ENCODE measurements at regions of chr14 and their contacts with region 1.

Region 1: GRCh38 chr14:68685419-68686204 is 107.3 kb downstream of the ZFP36L1 start:
- DNase-seq: peak; percentile 60 to 89 (median 77)
- ATAC-seq: peak; percentile 86 to 90 (median 88)
- H3K4me3 ChIP-seq: no peak overlapping the region
- H3K4me3 Mint-ChIP-seq: peak overlapping the region; percentile 4 to 78 (median 50)
- H3K27ac ChIP-seq: peak overlapping the region; percentile 88
- H3K27ac Mint-ChIP-seq: peak overlapping the region; percentile 95 to 96
- H3K4me1 ChIP-seq: peaks cover 29 to 60% of the 10 kb centered on the region in 2 experiments
- H3K4me1 Mint-ChIP-seq: peaks cover 57 to 71% (median 66%) of the 10 kb centered on the region in 3 donors
- H3K27me3 ChIP-seq: no peaks in the 10 kb centered on the region
- H3K27me3 Mint-ChIP-seq: no peaks in the 10 kb centered on the region

Region 2: DNA sequence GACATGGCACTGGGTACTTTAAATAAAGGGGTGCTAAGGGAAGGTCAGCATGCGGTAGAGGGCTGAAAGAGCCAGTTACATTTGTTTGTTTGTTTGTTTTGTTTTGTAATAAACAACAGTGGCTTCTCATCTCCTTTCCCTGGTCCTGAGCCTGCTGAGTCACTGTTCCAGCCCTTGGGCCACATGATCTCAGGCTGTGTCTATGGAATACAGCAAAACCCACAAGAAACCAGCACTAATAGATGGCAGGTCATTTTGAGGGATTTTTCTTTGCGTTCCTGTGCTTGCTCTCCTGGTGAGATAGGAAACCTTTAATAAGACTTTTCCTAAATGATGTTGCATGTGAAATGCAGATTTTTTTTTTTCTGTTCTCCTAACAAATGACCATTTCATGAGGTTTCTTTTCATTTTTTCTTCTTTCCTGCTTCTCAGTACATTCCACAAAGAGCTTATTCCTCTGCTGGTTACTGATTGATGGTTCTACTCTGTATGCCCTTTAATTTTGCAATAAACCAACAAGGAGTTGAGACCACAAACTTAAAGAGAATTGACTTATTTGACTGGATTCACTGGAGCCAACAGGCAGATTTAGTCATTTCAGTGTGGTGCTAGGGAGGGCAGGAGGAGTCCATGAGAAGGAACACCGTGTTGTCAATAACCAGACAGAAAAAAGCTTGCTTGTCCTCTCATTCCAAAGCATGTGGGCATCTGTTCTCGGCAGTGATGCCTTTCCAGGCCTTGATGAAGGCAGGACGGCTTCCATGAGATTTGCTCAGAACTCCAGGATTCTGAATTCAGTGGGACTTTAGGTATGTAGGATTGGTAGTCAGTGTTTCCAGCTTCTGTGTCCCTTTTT is 406.8 kb before region 1 on chr14:
- CTCF ChIA-PET with region 1: no interaction called
- POLR2A ChIA-PET with region 1: interaction called in 1 of 2 experiments, 13 read pairs
- DNase-seq: no peak
- ATAC-seq: no peak
- H3K4me3 ChIP-seq: no peak overlapping the region
- H3K4me3 Mint-ChIP-seq: no peak overlapping the region
- H3K27ac ChIP-seq: no peak overlapping the region
- H3K27ac Mint-ChIP-seq: peak overlapping the region in 1 of 2 donors; percentile 18
- H3K4me1 ChIP-seq: peaks cover 31 to 38% of the 10 kb centered on the region in 2 experiments
- H3K4me1 Mint-ChIP-seq: peaks cover 61 to 81% (median 76%) of the 10 kb centered on the region in 3 donors
- H3K27me3 ChIP-seq: no peaks in the 10 kb centered on the region
- H3K27me3 Mint-ChIP-seq: no peaks in the 10 kb centered on the region

Region 3: DNA sequence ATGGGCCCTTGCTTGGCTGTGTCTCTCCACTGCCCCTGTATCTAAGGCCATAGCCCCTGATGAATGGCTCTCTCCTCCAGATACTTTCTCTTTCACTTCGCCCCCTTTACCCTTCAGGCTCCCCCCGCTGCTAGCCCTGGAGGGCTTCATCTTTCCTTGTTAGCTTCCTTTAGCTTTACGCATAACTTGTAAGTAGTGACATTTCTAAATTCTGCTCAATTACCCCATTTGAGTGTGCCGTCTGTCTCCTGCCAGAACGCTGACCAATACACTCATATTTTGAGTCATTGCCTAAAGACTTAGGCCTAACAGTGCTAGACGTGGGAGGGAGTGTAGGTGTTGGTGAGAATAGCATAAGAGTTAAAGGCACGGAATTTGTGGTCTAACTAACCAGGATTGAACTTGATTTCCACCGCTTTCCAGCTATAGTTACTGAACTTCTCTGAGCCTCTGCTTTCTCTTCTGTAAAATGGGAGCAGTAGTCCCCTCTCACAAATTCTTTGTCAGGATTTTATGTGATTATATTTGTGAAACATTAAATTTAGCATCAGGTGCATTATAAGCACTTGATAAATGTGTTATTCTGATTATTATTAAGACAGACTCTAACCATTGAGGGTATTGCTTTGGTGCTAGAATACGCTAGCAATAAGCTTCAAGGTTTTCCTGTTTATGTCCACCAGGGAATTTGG is 22.1 kb before region 1 on chr14:
- CTCF ChIA-PET with region 1: interaction called in 1 of 2 experiments, 12 read pairs
- POLR2A ChIA-PET with region 1: interaction called in 1 of 2 experiments, 8 read pairs
- DNase-seq: peak in 1 of 35 experiments; percentile 42
- ATAC-seq: peak; percentile 35 to 60 (median 56)
- H3K4me3 ChIP-seq: peak overlapping the region in 1 of 2 donors; percentile 46
- H3K4me3 Mint-ChIP-seq: peak overlapping the region; percentile 58 to 84 (median 77)
- H3K27ac ChIP-seq: peak overlapping the region; percentile 56
- H3K27ac Mint-ChIP-seq: peak overlapping the region; percentile 87 to 90
- H3K4me1 ChIP-seq: peaks cover 11 to 17% of the 10 kb centered on the region in 2 experiments
- H3K4me1 Mint-ChIP-seq: peaks cover 40 to 44% (median 43%) of the 10 kb centered on the region in 3 donors
- H3K27me3 ChIP-seq: peaks cover 0 to 3% of the 10 kb centered on the region in 2 experiments
- H3K27me3 Mint-ChIP-seq: no peaks in the 10 kb centered on the region

Region 4: GRCh38 chr14:68905107-68905895 is 219.7 kb after region 1 on chr14:
- CTCF ChIA-PET with region 1: no interaction called
- POLR2A ChIA-PET with region 1: no interaction called
- DNase-seq: no peak
- ATAC-seq: no peak
- H3K4me3 ChIP-seq: no peak overlapping the region
- H3K4me3 Mint-ChIP-seq: no peak overlapping the region
- H3K27ac ChIP-seq: no peak overlapping the region
- H3K27ac Mint-ChIP-seq: no peak overlapping the region
- H3K4me1 ChIP-seq: no peaks in the 10 kb centered on the region
- H3K4me1 Mint-ChIP-seq: peaks cover 3 to 7% (median 3%) of the 10 kb centered on the region in 3 donors
- H3K27me3 ChIP-seq: no peaks in the 10 kb centered on the region
- H3K27me3 Mint-ChIP-seq: no peaks in the 10 kb centered on the region